ENCODE measurements at regions of chr11 and their contacts with region 1.

Region 1: DNA sequence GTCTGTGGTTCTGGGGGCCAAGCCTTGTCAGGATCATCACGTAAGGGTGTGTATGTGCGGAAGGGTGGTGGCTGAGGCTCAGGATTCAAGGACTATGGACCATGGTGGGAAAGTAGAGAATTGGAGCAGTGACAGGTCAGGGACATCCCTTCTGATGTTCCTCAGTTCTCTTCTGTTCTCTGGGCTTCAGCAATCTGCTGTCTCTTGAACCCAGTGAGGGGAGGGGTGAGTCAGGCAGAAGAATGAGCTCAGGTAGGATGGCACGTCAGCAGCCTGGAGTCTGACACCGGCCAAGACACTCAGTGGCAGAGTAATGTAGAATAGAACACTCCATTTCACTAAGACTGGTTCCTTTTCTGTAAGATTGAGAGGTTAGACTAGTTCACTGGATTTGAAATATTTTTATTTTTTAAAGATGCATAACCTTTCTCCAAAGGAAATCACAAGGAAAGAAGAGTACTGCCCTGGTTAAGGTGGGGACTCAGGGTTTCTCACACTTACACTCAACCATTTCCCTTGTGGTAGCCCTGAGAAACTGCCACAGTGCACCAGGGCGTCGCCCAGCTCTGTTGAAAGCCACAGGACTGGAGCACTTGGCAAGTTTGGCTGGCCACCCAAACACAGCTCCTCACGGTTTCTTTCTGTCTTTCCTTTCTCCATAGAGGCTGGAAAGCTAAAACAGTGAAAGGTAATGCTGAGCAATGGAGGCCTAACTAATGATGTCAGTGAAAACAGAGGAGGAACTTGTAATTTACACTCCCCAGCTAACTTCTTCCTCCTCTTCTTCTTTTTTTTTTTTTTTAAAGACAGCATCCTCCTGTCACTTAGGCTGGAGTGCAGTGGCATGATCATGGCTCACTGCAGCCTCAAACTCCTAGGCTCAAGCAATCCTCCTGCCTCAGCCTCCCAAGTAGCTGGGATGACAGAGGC is 23.1 kb upstream of the MICAL2 start:
- DNase-seq: peak; percentile 69
- ATAC-seq: peak; percentile 86
- H3K4me3 Mint-ChIP-seq: no peak overlapping the region
- H3K27ac Mint-ChIP-seq: peak overlapping the region; percentile 75
- H3K4me1 Mint-ChIP-seq: peaks cover 60% of the 10 kb centered on the region
- H3K27me3 Mint-ChIP-seq: no peaks in the 10 kb centered on the region
- CTCF ChIP-seq: no peak

Region 2: GRCh38 chr11:11782532-11783110 is 304.7 kb before region 1 on chr11:
- CTCF ChIA-PET with region 1: no interaction called
- POLR2A ChIA-PET with region 1: no interaction called
- intact Hi-C with region 1: no loop called
- DNase-seq: no peak
- ATAC-seq: no peak
- H3K4me3 Mint-ChIP-seq: no peak overlapping the region
- H3K27ac Mint-ChIP-seq: no peak overlapping the region
- H3K4me1 Mint-ChIP-seq: no peaks in the 10 kb centered on the region
- H3K27me3 Mint-ChIP-seq: peaks cover 2% of the 10 kb centered on the region
- CTCF ChIP-seq: no peak

Region 3: GRCh38 chr11:11884774-11885481 is 202.4 kb before region 1 on chr11:
- CTCF ChIA-PET with region 1: no interaction called
- POLR2A ChIA-PET with region 1: no interaction called
- intact Hi-C with region 1: no loop called
- DNase-seq: peak; percentile 12
- ATAC-seq: peak; percentile 61
- H3K4me3 Mint-ChIP-seq: no peak overlapping the region
- H3K27ac Mint-ChIP-seq: peak overlapping the region; percentile 57
- H3K4me1 Mint-ChIP-seq: peaks cover 48% of the 10 kb centered on the region
- H3K27me3 Mint-ChIP-seq: no peaks in the 10 kb centered on the region
- CTCF ChIP-seq: no peak

Region 4: DNA sequence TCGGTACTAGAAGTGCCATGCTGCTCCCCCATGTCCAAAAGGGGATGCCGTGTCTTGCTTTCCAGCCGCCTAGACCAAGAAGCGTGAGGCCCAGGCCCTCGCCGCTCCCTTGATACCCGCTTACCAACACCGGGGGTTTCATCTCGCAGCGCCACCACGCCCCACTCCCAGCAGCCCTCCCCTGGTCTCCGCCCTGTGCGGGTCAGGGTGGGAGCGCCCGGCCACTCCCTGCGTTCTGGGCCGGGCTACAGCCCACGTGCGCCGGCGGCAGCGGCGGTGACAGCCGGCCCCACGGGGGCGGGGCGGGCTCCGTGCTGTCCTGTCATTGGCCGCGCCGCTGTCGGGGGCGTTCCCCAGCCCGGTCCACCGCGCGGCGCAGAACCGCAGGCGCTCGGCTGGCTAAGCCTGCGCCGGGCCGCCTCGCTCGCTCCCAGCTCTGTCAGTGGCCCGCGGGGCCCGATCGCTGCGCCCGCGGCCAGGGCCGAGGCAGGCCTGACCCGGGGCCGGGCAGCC is 22.9 kb after region 1 on chr11 and contains the start of gene MICAL2:
- CTCF ChIA-PET with region 1: interaction called, 3 read pairs
- POLR2A ChIA-PET with region 1: interaction called, 10 read pairs
- intact Hi-C with region 1: no loop called
- DNase-seq: peak; percentile 88
- ATAC-seq: peak; percentile 92
- H3K4me3 Mint-ChIP-seq: peak within 1 kb of the TSS; percentile 78
- H3K27ac Mint-ChIP-seq: peak within 1 kb of the TSS; percentile 94
- H3K4me1 Mint-ChIP-seq: peaks cover 31% of the 10 kb centered on the region
- H3K27me3 Mint-ChIP-seq: no peaks in the 10 kb centered on the region
- CTCF ChIP-seq: no peak
- total RNA-seq, gene MICAL2: 99.8 to 105 TPM

Region 5: GRCh38 chr11:12224537-12224893 is 137.2 kb after region 1 on chr11:
- CTCF ChIA-PET with region 1: interaction called, 12 read pairs
- POLR2A ChIA-PET with region 1: no interaction called
- intact Hi-C with region 1: no loop called
- DNase-seq: peak; percentile 99
- ATAC-seq: peak; percentile 96
- H3K4me3 Mint-ChIP-seq: peak overlapping the region; percentile 68
- H3K27ac Mint-ChIP-seq: peak overlapping the region; percentile 94
- H3K4me1 Mint-ChIP-seq: peaks cover 46% of the 10 kb centered on the region
- H3K27me3 Mint-ChIP-seq: no peaks in the 10 kb centered on the region
- CTCF ChIP-seq: no peak

Measured in activated CD8-positive, alpha-beta T cell treated with anti-CD3 and anti-CD28 coated beads for 36 hours (primary cell).